Activated naive CD4-positive, alpha-beta T cell treated with anti-CD3 and anti-CD28 coated beads, Interleukin-2, amount 10 ng/mL, durations not matched to agents 7 days and 5 days (primary cell): ENCODE measurements at regions of chr10 and their contacts with region 1.

Region 1: DNA sequence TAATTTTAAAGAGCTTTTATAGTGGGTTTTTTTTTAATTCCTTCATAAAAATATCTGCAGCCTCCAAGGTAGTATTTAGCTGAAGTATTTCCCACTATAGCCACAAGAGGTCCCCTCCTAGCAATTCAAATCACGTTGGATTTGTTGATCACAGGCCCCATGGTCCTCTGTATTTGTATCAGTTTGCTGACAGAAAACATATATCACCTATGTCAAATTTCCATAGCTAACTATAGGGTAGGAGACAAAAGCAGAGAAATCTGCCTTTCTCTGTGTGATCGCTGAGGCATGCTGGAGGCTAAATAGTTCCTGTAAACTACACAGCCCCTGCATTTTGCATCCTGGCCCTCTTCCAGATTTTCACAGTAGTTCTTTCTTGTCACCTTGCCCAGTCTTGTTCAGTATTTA is 1.7 kb upstream of the CTNNA3 start:
- DNase-seq: peak; percentile 34
- H3K4me3 Mint-ChIP-seq: no peak overlapping the region
- H3K27ac Mint-ChIP-seq: no peak overlapping the region
- H3K4me1 Mint-ChIP-seq: peaks cover 12% of the 10 kb centered on the region
- H3K27me3 Mint-ChIP-seq: peaks cover 23% of the 10 kb centered on the region

Region 2: DNA sequence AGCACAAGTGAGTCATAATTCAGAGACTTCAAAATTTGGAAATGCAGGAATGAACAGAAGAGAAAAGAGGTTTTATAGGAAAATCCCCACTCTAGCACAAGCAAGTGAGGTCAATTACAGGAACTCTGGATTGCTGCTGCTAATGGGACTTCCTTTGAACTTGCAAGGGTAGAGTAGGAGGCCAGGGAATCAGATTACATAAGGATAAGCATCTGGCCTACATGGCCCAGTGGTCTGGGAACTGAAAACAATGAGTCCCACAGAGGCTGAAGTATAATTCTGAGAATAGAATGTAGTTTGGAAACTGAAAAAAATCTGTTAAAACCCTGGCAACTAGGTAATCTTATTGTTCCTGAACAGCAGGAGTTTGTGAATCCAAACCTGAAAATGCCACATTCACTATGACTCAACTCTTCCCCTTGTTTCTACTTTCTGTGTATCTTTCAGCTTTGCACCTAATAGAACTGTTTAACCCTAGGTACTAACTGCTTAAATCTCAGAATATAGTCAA is 68.2 kb before region 1 on chr10:
- CTCF ChIA-PET with region 1: no interaction called
- DNase-seq: no peak
- H3K4me3 Mint-ChIP-seq: no peak overlapping the region
- H3K27ac Mint-ChIP-seq: no peak overlapping the region
- H3K4me1 Mint-ChIP-seq: no peaks in the 10 kb centered on the region
- H3K27me3 Mint-ChIP-seq: peaks cover 11% of the 10 kb centered on the region

Region 3: DNA sequence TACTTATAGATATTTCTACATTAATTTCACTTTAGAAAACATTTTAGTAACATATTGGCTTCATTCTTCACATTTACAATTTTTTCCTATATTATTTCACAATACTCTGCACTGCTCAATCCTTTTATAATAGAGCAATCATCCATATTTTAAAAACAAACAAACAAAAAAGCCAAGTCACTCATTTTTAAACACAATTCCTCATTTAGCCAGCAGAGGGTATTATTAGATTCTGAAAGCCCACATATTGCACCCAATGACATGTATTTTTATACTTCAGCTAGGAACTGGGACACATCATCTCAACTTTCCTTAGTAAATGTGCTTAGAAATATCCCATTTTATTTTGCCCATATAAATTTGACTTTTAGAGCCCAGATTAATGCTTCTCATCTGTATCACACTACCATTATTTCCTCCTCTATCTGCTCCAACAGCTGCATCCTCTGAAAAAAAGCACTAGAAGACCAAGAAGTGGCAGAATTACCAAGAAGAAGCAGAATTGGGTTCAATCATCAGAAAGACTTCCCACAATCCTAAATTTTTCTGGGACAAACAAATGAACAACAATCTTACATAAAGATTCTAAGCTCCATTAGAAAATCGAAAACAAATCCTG is 31.2 kb before region 1 on chr10:
- CTCF ChIA-PET with region 1: interaction called, 15 read pairs
- DNase-seq: no peak
- H3K4me3 Mint-ChIP-seq: no peak overlapping the region
- H3K27ac Mint-ChIP-seq: no peak overlapping the region
- H3K4me1 Mint-ChIP-seq: no peaks in the 10 kb centered on the region
- H3K27me3 Mint-ChIP-seq: no peaks in the 10 kb centered on the region